Posterior vena cava (tissue), 2 donors: ENCODE measurements at regions of chr10 and their contacts with region 1.

Region 1: GRCh38 chr10:103327906-103328305 is 23.0 kb downstream of the PCGF6 start:
- DNase-seq: peak; percentile 28

Region 2: GRCh38 chr10:103241262-103242012 is 86.5 kb before region 1 on chr10:
- intact Hi-C with region 1: no loop called
- DNase-seq: no peak

Region 3: DNA sequence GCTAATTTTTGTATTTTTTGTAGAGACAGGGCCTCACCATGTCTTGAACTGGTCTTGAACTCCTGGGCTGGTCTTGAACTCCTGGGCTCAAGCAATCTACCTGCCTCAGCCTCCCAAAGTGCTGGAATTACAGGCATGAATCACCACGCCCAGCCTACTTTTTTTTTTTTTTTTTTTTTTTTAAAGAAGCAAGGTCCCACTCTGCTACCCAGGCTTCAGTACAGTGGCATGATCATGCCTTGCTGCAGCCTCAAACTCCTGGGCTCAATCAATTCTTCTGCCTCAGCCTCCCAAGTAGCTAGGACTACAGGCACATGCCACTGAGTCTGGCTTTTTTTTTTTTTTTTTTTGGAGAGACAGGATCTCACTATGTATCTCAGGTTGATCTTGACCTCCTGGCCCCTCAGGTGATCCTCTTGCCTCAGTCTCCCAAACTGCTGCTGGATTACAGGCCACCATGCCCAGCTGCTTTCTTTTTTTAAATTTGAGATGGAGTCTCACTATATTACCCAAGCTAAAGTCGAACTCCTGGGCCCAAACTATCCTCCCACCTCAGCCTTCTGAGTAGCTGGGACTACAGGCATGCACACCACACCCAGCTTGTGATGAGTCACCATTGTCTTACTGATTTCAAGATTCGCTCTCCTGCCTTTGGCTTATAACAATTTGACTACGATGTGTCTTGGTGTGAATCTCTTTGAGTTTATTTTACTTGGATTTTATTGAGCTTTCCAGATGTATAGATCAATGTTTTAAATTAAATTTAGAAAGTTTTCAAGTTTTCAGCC is 73.2 kb before region 1 on chr10:
- intact Hi-C with region 1: loop called in 1 of 2 experiments (anchors 10 kb)
- DNase-seq: no peak